K562 (cell line): ENCODE measurements at regions of chr16 and their contacts with region 1.

Region 1: GRCh38 chr16:1929578-1930337 is 11.5 kb upstream of the HS3ST6 start:
- DNase-seq: peak; percentile 92 to 99 (median 96)
- ATAC-seq: peak; percentile 96
- H3K4me3 ChIP-seq: peak overlapping the region; percentile 44
- H3K27ac ChIP-seq: peak overlapping the region; percentile 66
- H3K4me1 ChIP-seq: peaks cover 4 to 39% of the 10 kb centered on the region in 2 experiments; a peak in 3 of 5 replicates
- H3K27me3 ChIP-seq: no peaks in the 10 kb centered on the region
- CTCF ChIP-seq: peak; percentile 79 to 99 (median 98)
- EP300 ChIP-seq: no peak
- POLR2A ChIP-seq: no peak; the same call in 1 of the 2 replicates
- RAD21 ChIP-seq: peak; percentile 98

Region 2: DNA sequence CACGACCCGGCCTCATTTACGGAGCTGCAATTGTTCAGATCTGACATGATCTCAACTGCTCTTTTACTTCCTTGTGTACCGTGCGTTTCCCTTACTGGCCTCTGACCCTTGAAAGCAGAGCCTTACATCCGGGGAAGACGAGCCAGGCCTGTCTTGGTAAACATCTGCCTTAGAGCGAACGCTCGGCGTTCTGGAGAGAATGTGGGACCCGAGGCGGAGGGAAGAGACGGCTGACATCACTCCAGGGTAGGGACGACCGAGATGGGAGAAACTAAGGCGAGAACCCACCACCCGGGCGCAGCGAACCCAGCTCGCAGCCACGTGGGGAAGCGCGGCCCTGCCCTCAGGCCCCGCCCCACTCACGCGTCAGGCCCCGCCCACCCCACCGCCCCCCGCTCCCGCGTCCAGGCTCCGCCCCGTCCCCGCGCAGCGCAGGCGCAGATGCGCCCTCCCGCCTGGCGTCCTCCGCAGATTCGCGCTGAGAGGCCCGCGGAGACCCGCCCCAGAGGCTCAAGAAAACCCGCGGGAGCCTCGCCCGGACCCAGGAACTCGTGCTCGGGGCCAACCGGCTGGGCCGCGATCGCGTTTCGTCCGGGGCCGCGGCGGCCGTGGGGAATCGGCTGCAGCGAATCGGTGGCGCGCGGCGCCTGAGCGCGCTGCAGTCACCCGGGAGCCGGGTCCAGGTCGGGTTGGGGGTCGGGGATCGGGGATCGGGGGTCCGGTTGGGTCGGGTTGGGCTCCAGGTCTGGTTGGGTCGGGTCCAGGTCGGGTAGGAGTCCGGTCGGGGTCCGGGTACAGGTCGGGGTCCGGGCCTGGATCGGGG is 436.6 kb before region 1 on chr16 and contains the start of gene TELO2:
- CTCF ChIA-PET with region 1: no interaction called
- POLR2A ChIA-PET with region 1: no interaction called
- in situ Hi-C with region 1: no loop called
- intact Hi-C with region 1: no loop called
- DNase-seq: peak; percentile 87 to 98 (median 97)
- ATAC-seq: peak; percentile 89
- H3K4me3 ChIP-seq: peak within 1 kb of the TSS; percentile 92
- H3K27ac ChIP-seq: peak within 1 kb of the TSS; percentile 94
- H3K4me1 ChIP-seq: peaks cover 16 to 56% of the 10 kb centered on the region in 2 experiments; a peak in 3 of 5 replicates
- H3K27me3 ChIP-seq: no peaks in the 10 kb centered on the region
- CTCF ChIP-seq: peak in 1 of 3 experiments; percentile 9; a peak in 1 of 6 replicates
- EP300 ChIP-seq: peak; percentile 96
- POLR2A ChIP-seq: peak; percentile 85
- RAD21 ChIP-seq: no peak
- polyA plus RNA-seq, gene TELO2: 0.51 to 1.4 TPM

Region 3: GRCh38 chr16:1782352-1783091 is 147.2 kb before region 1 on chr16 and contains the starts of genes NUBP2 and SPSB3:
- CTCF ChIA-PET with region 1: no interaction called
- POLR2A ChIA-PET with region 1: interaction called, 5 read pairs
- in situ Hi-C with region 1: loop called (anchors 5 kb)
- intact Hi-C with region 1: no loop called
- DNase-seq: peak; percentile 94 to 100 (median 96)
- ATAC-seq: peak; percentile 93
- H3K4me3 ChIP-seq: peak within 1 kb of the TSS; percentile 99
- H3K27ac ChIP-seq: peak within 1 kb of the TSS; percentile 78
- H3K4me1 ChIP-seq: peaks cover 4 to 84% of the 10 kb centered on the region in 2 experiments; a peak in 3 of 5 replicates
- H3K27me3 ChIP-seq: no peaks in the 10 kb centered on the region
- CTCF ChIP-seq: no peak
- EP300 ChIP-seq: no peak
- POLR2A ChIP-seq: peak; percentile 54
- RAD21 ChIP-seq: no peak
- polyA plus RNA-seq, gene NUBP2: 1.8 to 7.7 TPM
- polyA plus RNA-seq, gene SPSB3: 0.39 to 1.3 TPM

Region 4: GRCh38 chr16:1812732-1813163 is 117.0 kb before region 1 on chr16:
- CTCF ChIA-PET with region 1: interaction called, 27 read pairs
- POLR2A ChIA-PET with region 1: interaction called, 5 read pairs
- in situ Hi-C with region 1: no loop called
- intact Hi-C with region 1: no loop called
- DNase-seq: peak; percentile 75 to 82 (median 80)
- ATAC-seq: peak; percentile 92
- H3K4me3 ChIP-seq: no peak overlapping the region
- H3K27ac ChIP-seq: no peak overlapping the region
- H3K4me1 ChIP-seq: peaks cover 0 to 35% of the 10 kb centered on the region in 2 experiments; a peak in 3 of 5 replicates
- H3K27me3 ChIP-seq: no peaks in the 10 kb centered on the region
- CTCF ChIP-seq: peak; percentile 91 to 98 (median 97)
- EP300 ChIP-seq: no peak
- POLR2A ChIP-seq: no peak
- RAD21 ChIP-seq: peak; percentile 64 to 85

Region 5: DNA sequence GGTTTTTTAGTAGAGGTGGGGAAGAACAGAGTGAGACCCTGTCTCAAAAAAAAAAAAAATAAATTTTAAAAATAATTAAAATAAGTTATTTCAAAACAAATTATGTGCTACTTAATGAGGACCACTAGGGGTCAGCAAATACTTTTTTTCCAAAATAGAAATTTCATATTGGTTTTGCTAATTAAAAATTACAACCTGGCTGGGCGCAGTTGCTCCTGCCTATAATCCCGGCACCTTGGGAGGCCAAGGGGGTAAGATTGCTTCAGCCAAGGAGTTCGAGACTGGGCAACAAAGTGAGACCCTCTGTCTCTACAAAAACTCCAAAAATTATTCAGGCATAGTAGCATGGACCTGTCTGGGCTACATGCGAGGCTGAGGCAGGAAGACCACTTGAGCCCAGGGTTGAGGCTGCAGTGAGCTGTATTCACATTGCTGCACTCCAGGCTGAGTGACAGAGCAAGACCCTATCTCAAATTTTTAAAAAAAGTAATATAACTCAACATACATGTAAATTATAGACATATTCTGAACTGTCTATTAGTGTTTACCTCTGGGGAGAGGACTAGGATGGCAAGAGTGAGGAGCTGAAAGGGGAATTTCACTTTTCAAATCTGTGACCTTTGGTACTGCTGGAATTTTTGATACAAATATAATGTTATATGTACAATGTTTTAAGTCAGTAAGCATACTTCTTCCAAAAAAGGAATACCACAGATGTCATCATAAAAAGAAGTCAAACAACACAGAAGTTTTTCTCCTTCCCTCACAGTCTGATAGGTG is 65.9 kb before region 1 on chr16:
- CTCF ChIA-PET with region 1: interaction called, 51 read pairs
- POLR2A ChIA-PET with region 1: interaction called, 4 read pairs
- in situ Hi-C with region 1: no loop called
- intact Hi-C with region 1: loop called (anchors 2 kb)
- DNase-seq: peak in 1 of 4 experiments; percentile 29
- ATAC-seq: peak; percentile 66
- H3K4me3 ChIP-seq: no peak overlapping the region
- H3K27ac ChIP-seq: no peak overlapping the region
- H3K4me1 ChIP-seq: no peaks in the 10 kb centered on the region
- H3K27me3 ChIP-seq: no peaks in the 10 kb centered on the region
- CTCF ChIP-seq: peak; percentile 34 to 68 (median 40); a peak in 4 of 6 replicates
- EP300 ChIP-seq: no peak
- POLR2A ChIP-seq: no peak
- RAD21 ChIP-seq: peak; percentile 57 to 62

Region 6: DNA sequence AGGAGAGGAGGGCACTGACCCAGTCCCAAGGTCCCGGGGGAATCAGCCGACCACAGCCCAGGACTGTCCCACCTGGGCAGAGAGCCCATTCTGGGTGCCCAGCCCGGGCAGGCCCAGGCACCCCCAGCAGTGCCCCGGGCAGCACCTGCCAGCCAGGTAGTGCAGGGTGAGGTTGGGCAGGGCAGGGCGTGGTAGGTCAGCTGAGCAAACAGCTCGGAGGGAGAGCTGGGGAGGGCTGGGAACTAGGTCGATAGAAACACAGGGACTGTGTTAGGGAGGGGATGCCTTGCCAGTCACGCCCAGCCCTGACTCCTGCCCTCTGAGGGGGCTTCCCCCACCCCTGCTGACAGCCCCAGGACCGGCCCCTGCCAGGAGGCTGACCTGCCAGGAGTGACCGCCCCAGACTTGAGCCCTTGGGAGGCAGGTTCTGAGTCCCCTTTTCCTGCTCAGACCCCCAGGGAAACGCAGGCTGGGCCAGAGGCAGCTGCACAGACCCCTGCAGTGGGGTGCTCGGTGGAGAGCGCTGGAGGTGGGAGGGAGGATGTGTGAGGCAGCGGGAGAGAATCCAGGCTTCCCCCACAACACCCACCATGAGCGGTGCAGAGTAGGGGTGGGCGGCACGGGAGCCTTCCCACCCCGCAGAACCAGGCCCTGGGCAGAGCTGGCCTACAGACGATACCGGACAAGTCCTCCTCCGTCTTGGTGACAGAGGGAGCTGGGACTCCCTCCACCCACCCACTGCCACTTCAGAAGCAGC is 16.3 kb before region 1 on chr16:
- CTCF ChIA-PET with region 1: no interaction called
- POLR2A ChIA-PET with region 1: no interaction called
- in situ Hi-C with region 1: no loop called
- intact Hi-C with region 1: no loop called
- DNase-seq: no peak
- ATAC-seq: 0 out of 3 replicates have a peak, but pooled peaks have one; percentile 19
- H3K4me3 ChIP-seq: no peak overlapping the region
- H3K27ac ChIP-seq: no peak overlapping the region
- H3K4me1 ChIP-seq: peaks cover 0 to 66% of the 10 kb centered on the region in 2 experiments; a peak in 2 of 5 replicates
- H3K27me3 ChIP-seq: peaks cover 20 to 43% of the 10 kb centered on the region in 2 experiments; a peak in 4 of 5 replicates
- CTCF ChIP-seq: no peak
- EP300 ChIP-seq: no peak
- POLR2A ChIP-seq: no peak
- RAD21 ChIP-seq: no peak

Region 7: DNA sequence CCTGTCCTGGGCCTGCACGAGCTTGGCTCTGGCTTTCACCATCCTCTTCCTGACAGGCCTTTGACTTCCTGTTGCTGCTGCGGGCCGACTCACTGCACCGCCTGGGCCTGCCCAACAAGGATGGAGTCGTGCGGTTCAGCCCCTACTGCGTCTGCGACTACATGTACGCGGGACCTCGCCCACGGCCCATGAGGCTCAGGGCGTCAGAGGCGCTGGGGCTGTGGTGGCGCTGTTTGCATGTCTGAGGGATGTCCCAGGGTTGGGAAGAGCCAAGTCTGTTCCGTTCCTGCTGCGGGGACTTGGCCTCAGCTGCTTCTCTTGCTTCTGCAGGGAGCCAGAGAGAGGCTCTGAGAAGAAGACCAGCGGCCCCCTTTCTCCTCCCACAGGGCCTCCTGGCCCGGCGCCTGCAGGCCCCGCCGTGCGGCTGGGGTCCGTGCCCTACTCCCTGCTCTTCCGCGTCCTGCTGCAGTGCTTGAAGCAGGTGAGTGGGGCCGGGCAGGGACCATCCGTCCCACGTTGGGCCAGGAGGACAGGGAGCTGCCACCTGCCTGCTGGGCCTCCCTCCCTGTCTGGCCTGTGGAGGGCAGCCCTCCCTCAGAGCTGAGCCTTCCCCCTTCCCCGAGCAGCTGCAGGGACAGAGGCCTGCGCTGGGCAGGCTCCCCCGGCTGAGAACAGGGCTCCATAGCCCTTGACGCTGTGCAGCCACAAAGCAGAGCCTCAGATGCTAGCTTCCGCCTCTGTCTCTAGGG is 141.9 kb after region 1 on chr16:
- CTCF ChIA-PET with region 1: no interaction called
- POLR2A ChIA-PET with region 1: no interaction called
- in situ Hi-C with region 1: no loop called
- intact Hi-C with region 1: no loop called
- DNase-seq: no peak
- ATAC-seq: peak; percentile 66
- H3K4me3 ChIP-seq: no peak overlapping the region
- H3K27ac ChIP-seq: no peak overlapping the region
- H3K4me1 ChIP-seq: peaks cover 0 to 9% of the 10 kb centered on the region in 2 experiments; a peak in 2 of 5 replicates
- H3K27me3 ChIP-seq: no peaks in the 10 kb centered on the region
- CTCF ChIP-seq: no peak; a peak in 1 of 6 replicates
- EP300 ChIP-seq: no peak
- POLR2A ChIP-seq: no peak
- RAD21 ChIP-seq: 0 out of 4 replicates have a peak, but pooled peaks of 1 of the 2 experiments have one; percentile 3